Calu3 (cell line): ENCODE measurements at regions of chr3 and their contacts with region 1.

Region 1: DNA sequence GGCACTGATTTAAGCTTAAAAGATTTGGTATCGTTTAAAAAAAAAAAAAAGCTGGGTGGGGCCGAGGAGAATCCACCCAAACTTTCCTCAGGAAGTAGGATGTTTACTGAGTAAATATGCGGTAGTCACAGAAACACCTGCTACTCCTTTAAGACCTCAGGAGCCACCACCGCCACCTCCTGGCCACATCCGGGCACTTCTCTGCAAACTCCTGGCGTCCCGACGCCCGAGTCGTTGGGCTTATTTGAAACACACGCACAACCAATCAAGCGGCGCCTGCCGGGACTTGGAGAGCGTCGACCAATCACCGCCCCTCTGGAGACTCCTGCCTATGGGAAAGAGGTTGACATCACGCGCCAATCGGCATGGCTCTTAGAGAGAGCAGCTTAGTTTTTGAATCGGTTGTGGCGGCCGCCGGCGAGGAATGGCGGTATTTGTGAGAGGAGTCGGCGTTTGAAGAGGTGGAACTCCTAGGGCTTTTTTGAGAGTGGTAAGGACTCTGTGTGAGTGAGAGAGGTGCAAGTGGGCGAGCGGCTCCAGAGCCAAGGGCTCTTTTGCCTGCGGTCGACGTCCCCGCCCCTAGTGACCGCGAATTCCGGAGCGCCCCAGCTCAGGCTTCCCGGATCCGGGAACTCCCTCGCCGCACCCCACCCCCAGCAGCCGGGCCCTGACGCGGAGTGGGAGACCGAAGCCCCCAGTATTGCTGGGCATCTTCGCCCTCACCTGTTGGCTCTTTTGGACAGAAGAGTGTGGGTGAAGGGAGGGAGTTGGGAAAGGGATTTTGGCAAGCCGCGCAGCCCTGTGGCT is at the start of gene ECT2:
- DNase-seq: peak; percentile 100
- H3K4me3 Mint-ChIP-seq: peak within 1 kb of the TSS; percentile 85
- H3K27ac Mint-ChIP-seq: peak within 1 kb of the TSS; percentile 97
- H3K4me1 Mint-ChIP-seq: peaks cover 65% of the 10 kb centered on the region
- H3K27me3 Mint-ChIP-seq: no peaks in the 10 kb centered on the region
- CTCF ChIP-seq: peak; percentile 89
- total RNA-seq, gene ECT2: 170 and 201 TPM in 2 replicates

Region 2: DNA sequence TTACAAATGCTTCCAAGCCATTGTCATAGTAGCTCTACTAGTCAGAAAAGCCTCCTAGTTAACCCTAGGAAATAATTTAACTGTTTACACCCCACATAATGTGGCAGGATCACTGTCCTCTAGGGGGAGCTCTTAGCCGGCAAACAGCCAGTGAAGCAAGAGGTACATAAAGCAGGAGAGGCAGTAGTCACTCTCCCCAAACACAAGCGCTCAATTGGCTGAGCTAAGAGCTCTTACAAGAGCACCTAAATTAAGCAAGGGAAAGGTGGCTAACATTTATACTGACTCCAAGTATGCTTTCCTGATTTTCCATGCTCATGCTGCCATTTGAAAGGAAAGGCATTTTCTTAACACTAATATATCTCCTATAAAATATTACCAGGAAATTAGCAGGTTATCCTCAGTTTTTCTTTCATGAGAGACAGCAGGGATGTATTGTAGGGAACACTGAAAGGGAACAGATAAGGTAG is 77.3 kb before region 1 on chr3:
- CTCF ChIA-PET with region 1: interaction called, 80 read pairs
- intact Hi-C with region 1: loop called (anchors 1 kb)
- DNase-seq: peak; percentile 93
- H3K4me3 Mint-ChIP-seq: no peak overlapping the region
- H3K27ac Mint-ChIP-seq: peak overlapping the region; percentile 41
- H3K4me1 Mint-ChIP-seq: peaks cover 34% of the 10 kb centered on the region
- H3K27me3 Mint-ChIP-seq: no peaks in the 10 kb centered on the region
- CTCF ChIP-seq: peak; percentile 99

Region 3: GRCh38 chr3:172717493-172718088 is 33.0 kb before region 1 on chr3:
- CTCF ChIA-PET with region 1: interaction called, 9 read pairs
- intact Hi-C with region 1: loop called (anchors 2 kb)
- DNase-seq: no peak
- H3K4me3 Mint-ChIP-seq: no peak overlapping the region
- H3K27ac Mint-ChIP-seq: no peak overlapping the region
- H3K4me1 Mint-ChIP-seq: peaks cover 27% of the 10 kb centered on the region
- H3K27me3 Mint-ChIP-seq: no peaks in the 10 kb centered on the region
- CTCF ChIP-seq: no peak

Region 4: GRCh38 chr3:172787746-172788145 is 37.2 kb after region 1 on chr3:
- CTCF ChIA-PET with region 1: interaction called, 10 read pairs
- intact Hi-C with region 1: no loop called
- DNase-seq: no peak
- H3K4me3 Mint-ChIP-seq: no peak overlapping the region
- H3K27ac Mint-ChIP-seq: no peak overlapping the region
- H3K4me1 Mint-ChIP-seq: no peaks in the 10 kb centered on the region
- H3K27me3 Mint-ChIP-seq: no peaks in the 10 kb centered on the region
- CTCF ChIP-seq: no peak

Region 5: DNA sequence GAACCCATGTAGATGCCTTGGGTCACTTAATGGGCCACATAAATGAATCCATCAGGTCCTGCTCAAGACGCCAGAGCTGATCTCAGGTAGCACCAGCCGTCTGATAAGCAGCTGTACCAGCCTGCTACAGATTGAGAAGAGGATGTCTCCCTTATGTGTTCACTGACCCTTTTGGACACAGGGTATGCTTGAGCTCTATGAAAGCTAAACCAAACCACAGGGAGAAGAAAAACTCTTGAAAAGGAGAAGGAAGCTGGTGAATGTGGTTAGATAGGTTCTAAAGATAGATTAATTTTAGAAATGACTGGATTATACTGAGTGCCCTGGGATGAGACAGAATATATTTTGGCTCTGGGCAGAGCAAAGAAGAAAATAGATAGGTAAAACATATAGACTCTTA is 203.0 kb after region 1 on chr3:
- CTCF ChIA-PET with region 1: no interaction called
- intact Hi-C with region 1: no loop called
- DNase-seq: no peak
- H3K4me3 Mint-ChIP-seq: no peak overlapping the region
- H3K27ac Mint-ChIP-seq: no peak overlapping the region
- H3K4me1 Mint-ChIP-seq: no peaks in the 10 kb centered on the region
- H3K27me3 Mint-ChIP-seq: no peaks in the 10 kb centered on the region
- CTCF ChIP-seq: no peak